Psoas muscle (tissue), 8 donors: ENCODE measurements at regions of chr2 and their contacts with region 1.

Region 1: DNA sequence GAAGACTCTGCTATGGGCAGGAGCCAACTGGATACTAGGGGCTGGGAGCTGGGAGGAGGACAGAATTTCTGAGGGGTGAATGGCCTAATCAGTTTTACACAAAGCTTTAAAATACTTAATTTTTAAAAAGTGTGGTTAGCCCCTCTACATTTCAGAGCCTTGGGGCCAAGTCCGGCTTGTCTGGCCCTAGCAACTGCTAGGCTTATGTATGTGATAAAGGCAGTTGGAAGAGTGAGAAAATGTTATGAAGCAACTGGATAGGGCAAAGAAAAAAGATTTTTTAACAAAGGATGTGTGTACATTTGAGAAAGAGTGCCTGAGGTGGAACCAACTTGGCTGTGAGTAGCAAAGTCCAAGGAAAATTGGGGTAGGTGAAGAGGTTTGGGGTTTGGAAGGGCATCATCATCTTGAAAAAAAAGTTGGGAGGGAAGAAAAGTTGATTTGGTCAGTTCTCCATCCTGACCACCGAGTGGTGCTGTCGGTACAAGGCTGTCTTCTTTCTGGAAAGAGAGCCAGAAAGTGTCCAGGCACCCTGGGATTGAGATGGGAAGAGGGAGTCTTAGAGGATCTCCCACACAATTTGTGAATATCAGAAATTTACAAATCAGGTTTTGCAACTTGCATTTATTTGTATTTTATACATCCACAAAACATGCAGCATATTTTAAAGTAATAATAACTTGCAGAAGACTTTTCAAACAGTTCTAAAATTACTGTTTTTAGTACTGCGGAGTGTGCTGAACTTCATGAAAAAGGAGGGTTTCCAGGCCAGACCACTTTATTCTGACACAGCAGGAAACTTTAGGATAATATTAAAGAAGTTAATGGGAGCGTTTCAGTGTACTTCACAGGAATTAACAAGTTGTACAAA is 10.5 kb upstream of the CDK15 start:
- DNase-seq: no peak
- ATAC-seq: peak; percentile 66 to 80 (median 70)
- H3K4me3 ChIP-seq: no peak overlapping the region
- H3K27ac ChIP-seq: no peak overlapping the region
- H3K4me1 ChIP-seq: no peaks in the 10 kb centered on the region
- H3K27me3 ChIP-seq: no peaks in the 10 kb centered on the region
- CTCF ChIP-seq: peak; percentile 65

Region 2: DNA sequence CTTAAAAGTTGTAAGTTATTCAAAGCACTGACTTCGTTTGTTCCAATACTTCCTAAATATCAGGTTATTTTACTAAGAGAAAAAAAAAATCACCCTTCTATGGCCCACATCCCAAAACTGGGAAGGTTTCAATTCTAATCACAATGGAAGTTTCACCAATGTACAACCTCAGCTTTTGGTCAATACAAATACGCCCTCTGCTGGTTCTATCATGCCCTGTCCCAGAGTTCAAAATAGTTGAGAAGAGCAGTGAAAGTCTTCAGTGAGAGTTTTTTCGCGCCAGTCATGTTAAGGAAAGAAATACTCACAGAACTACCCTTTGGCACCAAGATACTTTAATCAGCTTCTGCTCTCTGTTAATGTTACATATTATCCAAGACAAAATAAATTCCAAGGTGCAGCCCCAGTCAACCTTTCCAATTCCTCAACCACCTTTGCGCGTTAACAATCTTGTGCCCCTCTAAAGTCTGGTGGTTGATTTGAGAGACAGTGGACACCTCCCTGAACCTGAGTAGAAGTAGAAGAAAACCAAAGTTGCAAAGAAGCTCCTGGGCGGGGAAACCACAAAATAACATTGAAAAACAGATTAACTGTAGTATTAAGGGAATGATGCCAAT is 382.6 kb after region 1 on chr2:
- intact Hi-C with region 1: loop called (anchors 2 to 5 kb)
- DNase-seq: no peak
- ATAC-seq: peak; percentile 72 to 96 (median 87)
- H3K4me3 ChIP-seq: no peak overlapping the region
- H3K27ac ChIP-seq: no peak overlapping the region
- H3K4me1 ChIP-seq: no peaks in the 10 kb centered on the region
- H3K27me3 ChIP-seq: no peaks in the 10 kb centered on the region
- CTCF ChIP-seq: peak; percentile 90

Region 3: GRCh38 chr2:202671317-202672035 is 875.6 kb after region 1 on chr2:
- intact Hi-C with region 1: no loop called
- DNase-seq: no peak
- ATAC-seq: no peak
- H3K4me3 ChIP-seq: no peak overlapping the region
- H3K27ac ChIP-seq: no peak overlapping the region
- H3K4me1 ChIP-seq: no peaks in the 10 kb centered on the region
- H3K27me3 ChIP-seq: no peaks in the 10 kb centered on the region
- CTCF ChIP-seq: no peak